CD8-positive, alpha-beta T cell (primary cell): ENCODE measurements at regions of chr11 and their contacts with region 1.

Region 1: GRCh38 chr11:1262172-1263006 is 39.5 kb downstream of the MUC5B start:
- DNase-seq: peak; percentile 78 to 92 (median 86)
- ATAC-seq: peak; percentile 91
- H3K4me3 ChIP-seq: peak overlapping the region; percentile 58
- H3K4me3 Mint-ChIP-seq: peak overlapping the region; percentile 86
- H3K27ac ChIP-seq: peak overlapping the region; percentile 85 to 90
- H3K27ac Mint-ChIP-seq: peak overlapping the region; percentile 91
- H3K4me1 ChIP-seq: peaks cover 18% of the 10 kb centered on the region
- H3K4me1 Mint-ChIP-seq: peaks cover 18% of the 10 kb centered on the region
- H3K27me3 ChIP-seq: no peaks in the 10 kb centered on the region
- H3K27me3 Mint-ChIP-seq: no peaks in the 10 kb centered on the region
- CTCF ChIP-seq: no peak

Region 2: DNA sequence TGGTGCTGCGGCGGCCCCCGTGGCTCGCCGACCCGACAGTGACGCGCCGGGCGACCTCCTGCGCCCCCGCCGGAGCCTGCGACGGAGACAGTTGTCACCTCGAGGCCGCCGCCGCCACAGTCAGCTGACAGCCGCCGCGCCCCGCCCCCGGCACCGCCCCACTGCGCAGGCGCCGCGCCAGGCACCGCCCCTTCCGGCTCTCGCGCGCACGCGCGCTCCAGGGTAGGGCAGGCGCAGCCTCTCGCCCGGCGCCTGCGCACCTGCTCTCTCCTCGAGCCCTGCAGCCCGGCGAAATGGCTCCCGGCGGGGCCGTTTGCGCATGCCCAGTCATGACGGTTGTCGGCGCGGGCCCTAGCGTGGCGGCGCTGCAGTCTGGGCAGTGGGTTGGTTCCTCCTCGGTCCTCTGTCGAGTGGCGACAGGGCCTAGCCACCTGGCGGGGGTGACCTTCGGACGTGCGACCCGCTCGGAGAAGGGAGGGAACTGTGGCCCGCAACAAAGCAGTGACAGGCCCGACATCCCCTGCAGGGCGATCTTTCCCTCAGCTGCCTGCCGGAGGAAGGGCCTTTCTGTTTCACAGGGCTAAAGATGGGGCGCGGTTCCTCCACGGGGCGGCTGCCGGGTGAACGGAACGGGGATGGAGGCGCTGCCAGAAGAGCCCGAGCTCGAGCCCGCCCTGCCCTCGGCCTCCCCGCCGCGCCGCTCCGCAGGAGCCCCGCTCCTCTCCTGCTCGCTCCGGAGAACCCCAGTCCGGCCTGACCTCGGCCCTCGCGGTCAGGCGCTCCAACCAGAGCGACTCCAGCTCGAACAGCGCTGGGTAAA is 47.3 kb after region 1 on chr11 and contains the start of gene TOLLIP:
- CTCF ChIA-PET with region 1: no interaction called
- POLR2A ChIA-PET with region 1: interaction called, 14 read pairs
- intact Hi-C with region 1: loop called (anchors 1 kb)
- DNase-seq: peak; percentile 96 to 99 (median 97)
- ATAC-seq: peak; percentile 76
- H3K4me3 ChIP-seq: peak within 1 kb of the TSS; percentile 83 to 84
- H3K4me3 Mint-ChIP-seq: peak within 1 kb of the TSS; percentile 90
- H3K27ac ChIP-seq: peak within 1 kb of the TSS; percentile 86 to 95
- H3K27ac Mint-ChIP-seq: peak within 1 kb of the TSS; percentile 97
- H3K4me1 ChIP-seq: peaks cover 49% of the 10 kb centered on the region
- H3K4me1 Mint-ChIP-seq: peaks cover 49% of the 10 kb centered on the region
- H3K27me3 ChIP-seq: no peaks in the 10 kb centered on the region
- H3K27me3 Mint-ChIP-seq: no peaks in the 10 kb centered on the region
- CTCF ChIP-seq: no peak
- total RNA-seq, gene TOLLIP: 36.2 to 40.9 TPM

Region 3: DNA sequence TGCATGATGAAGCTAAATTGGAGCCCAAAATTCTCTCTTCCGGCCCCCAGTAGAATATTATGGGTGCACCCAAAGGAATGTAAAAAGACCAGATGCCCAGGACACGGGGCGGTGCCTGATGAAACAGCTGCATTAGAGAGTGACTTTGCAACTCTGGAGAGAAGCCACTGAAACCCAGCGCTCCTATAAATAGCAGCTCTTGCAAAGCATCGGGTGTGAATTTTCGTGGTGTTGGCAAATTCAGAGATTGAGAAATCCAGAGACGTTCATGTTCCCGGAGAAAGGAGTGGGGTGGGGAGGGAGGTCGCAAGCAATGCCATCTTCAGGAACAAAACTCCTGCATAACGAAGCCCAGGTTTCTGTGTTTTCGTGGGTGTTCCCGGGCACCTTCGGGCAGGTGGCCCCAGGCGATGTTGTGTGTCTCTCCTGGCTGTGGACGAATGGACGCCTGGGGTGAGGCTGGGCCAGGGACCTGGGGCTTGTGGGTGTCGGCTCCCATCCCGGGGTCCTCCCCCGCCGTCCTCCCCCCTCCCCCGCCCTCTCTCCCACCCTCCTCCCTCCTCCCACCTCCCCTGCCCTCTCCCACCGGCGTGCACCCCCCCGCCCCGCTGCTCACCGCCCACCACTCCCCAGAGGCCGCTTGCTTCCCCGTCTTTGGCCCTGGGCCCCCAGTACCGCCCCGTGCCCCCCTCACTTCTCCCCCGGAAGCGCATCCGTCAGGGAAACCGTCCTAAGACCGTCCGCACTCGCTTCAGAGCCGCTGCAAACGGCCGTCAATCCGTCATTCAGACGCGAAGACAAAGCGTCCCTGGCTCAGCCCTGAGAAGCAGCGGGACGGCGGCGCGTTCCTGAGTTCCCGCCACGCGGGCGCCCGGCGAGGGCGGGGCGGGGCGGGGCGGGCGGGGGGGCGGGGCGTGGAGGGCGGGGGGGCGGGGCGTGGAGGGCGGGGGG is 73.7 kb after region 1 on chr11:
- CTCF ChIA-PET with region 1: no interaction called
- POLR2A ChIA-PET with region 1: interaction called, 4 read pairs
- intact Hi-C with region 1: loop called in 1 of 2 experiments (anchors 1 kb)
- DNase-seq: peak in 8 of 9 experiments; percentile 50 to 85 (median 66)
- ATAC-seq: peak; percentile 69
- H3K4me3 ChIP-seq: peak overlapping the region; percentile 45 to 60
- H3K4me3 Mint-ChIP-seq: peak overlapping the region; percentile 80
- H3K27ac ChIP-seq: peak overlapping the region in 1 of 2 experiments; percentile 19
- H3K27ac Mint-ChIP-seq: peak overlapping the region; percentile 71
- H3K4me1 ChIP-seq: peaks cover 12% of the 10 kb centered on the region
- H3K4me1 Mint-ChIP-seq: peaks cover 18% of the 10 kb centered on the region
- H3K27me3 ChIP-seq: no peaks in the 10 kb centered on the region
- H3K27me3 Mint-ChIP-seq: no peaks in the 10 kb centered on the region
- CTCF ChIP-seq: no peak

Region 4: DNA sequence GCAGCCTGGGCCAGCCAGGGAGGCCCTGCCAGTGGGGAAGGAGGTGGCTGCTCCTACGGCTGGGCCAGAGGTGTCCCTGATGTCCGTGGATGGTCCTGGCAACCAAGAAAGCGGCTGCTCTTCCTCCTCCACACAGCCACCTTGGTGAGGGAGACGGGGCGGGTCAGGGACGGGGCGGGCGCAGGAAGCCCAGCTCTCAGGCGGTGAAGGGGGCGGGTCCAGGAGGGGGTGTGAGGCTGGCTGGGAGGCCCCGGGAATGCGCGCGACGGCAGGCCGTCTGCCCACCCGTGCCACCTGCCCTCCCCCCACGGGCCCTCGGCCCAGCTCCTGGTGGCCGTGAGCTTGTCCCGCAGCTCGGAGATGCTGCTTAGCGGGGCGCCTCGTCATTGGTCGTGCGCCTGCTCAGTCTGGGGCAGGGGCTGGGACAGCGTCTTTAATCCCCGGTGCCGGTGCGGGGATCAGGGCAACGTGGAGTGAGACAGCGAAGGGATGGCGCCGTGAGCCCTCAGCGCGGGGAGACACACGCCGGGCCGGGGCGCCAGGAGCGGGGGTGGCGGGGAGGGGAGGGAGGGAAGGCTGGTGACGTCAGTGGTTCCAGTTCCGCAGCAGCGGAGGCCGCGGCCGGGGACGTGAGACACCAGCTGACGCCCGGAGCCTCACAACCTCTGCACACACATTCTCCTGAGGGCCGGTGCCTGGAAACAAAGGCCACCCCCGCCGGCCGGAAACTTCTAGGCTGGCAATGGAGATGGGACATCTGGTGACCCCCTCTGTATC is 120.6 kb after region 1 on chr11:
- CTCF ChIA-PET with region 1: no interaction called
- POLR2A ChIA-PET with region 1: interaction called, 5 read pairs
- intact Hi-C with region 1: loop called (anchors 1 to 5 kb)
- DNase-seq: peak; percentile 59 to 91 (median 78)
- ATAC-seq: peak; percentile 79
- H3K4me3 ChIP-seq: peak overlapping the region; percentile 67 to 83
- H3K4me3 Mint-ChIP-seq: peak overlapping the region; percentile 75
- H3K27ac ChIP-seq: peak overlapping the region; percentile 70 to 94
- H3K27ac Mint-ChIP-seq: peak overlapping the region; percentile 57
- H3K4me1 ChIP-seq: peaks cover 4% of the 10 kb centered on the region
- H3K4me1 Mint-ChIP-seq: peaks cover 8% of the 10 kb centered on the region
- H3K27me3 ChIP-seq: no peaks in the 10 kb centered on the region
- H3K27me3 Mint-ChIP-seq: no peaks in the 10 kb centered on the region
- CTCF ChIP-seq: no peak

Region 5: GRCh38 chr11:1389103-1389931 is 126.9 kb after region 1 on chr11:
- CTCF ChIA-PET with region 1: no interaction called
- POLR2A ChIA-PET with region 1: interaction called, 5 read pairs
- intact Hi-C with region 1: loop called in 1 of 2 experiments (anchors 5 kb)
- DNase-seq: peak; percentile 93 to 98 (median 97)
- ATAC-seq: peak; percentile 94
- H3K4me3 ChIP-seq: peak overlapping the region; percentile 66 to 78
- H3K4me3 Mint-ChIP-seq: peak overlapping the region; percentile 74
- H3K27ac ChIP-seq: no peak overlapping the region
- H3K27ac Mint-ChIP-seq: no peak overlapping the region
- H3K4me1 ChIP-seq: peaks cover 15% of the 10 kb centered on the region
- H3K4me1 Mint-ChIP-seq: peaks cover 11% of the 10 kb centered on the region
- H3K27me3 ChIP-seq: peaks cover 6 to 11% of the 10 kb centered on the region in 2 experiments
- H3K27me3 Mint-ChIP-seq: peaks cover 23% of the 10 kb centered on the region
- CTCF ChIP-seq: no peak

Region 6: GRCh38 chr11:1515082-1516060 is 253.0 kb after region 1 on chr11:
- CTCF ChIA-PET with region 1: interaction called, 3 read pairs
- POLR2A ChIA-PET with region 1: no interaction called
- intact Hi-C with region 1: loop called in 1 of 2 experiments (anchors 2 kb)
- DNase-seq: peak; percentile 56 to 84 (median 74)
- ATAC-seq: peak; percentile 67
- H3K4me3 ChIP-seq: no peak overlapping the region
- H3K4me3 Mint-ChIP-seq: peak overlapping the region; percentile 26
- H3K27ac ChIP-seq: no peak overlapping the region
- H3K27ac Mint-ChIP-seq: peak overlapping the region; percentile 18
- H3K4me1 ChIP-seq: peaks cover 51% of the 10 kb centered on the region
- H3K4me1 Mint-ChIP-seq: peaks cover 70% of the 10 kb centered on the region
- H3K27me3 ChIP-seq: no peaks in the 10 kb centered on the region
- H3K27me3 Mint-ChIP-seq: no peaks in the 10 kb centered on the region
- CTCF ChIP-seq: peak; percentile 95